ENCODE measurements at regions of chr12 and their contacts with region 1.

Region 1: DNA sequence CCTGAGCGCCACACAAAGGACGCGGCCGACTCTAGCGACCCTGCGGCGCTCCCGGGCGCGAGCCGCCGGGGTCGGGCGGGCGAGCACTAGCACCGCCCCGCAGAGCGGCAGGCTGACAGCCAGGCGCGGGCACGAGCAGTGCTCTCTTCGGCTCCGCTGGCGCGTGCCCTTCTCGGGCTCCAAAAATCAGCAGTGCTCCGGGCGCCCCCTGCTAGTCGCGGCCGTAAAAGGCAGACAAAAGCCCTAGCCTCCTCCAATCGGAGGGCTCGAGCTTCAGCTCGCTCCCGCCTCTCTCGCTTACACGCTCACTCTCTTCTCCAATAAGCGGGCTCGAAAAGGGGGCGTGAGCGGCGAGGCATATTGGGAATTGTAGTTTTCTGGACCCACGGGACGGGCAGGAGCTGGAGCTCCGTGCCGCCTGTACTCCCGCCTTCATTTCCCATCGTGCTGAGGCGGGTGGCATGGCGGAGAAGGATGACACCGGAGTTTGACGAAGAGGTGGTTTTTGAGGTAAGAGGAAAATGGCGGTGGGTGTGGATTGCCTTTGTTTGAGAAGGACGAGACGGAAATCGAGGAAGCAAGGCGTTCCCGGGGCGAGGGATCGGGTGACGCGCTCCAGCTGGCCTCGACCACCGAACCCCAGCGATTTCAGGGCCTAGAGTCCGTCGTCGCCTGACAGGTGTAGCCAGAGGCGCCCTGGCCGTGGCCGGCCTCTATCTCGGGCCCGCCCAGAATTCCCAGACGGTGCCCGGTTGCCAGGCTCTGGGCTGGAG is at the starts of genes FGD6 and VEZT:
- DNase-seq: peak; percentile 99
- H3K4me3 Mint-ChIP-seq: peak within 1 kb of the TSS; percentile 93
- H3K27ac Mint-ChIP-seq: peak within 1 kb of the TSS; percentile 97
- H3K4me1 Mint-ChIP-seq: peaks cover 32% of the 10 kb centered on the region
- H3K27me3 Mint-ChIP-seq: peaks cover 11% of the 10 kb centered on the region
- total RNA-seq, gene FGD6: 0.56 to 0.69 TPM
- total RNA-seq, gene VEZT: 33.3 to 41.7 TPM

Region 2: GRCh38 chr12:95182868-95183415 is 34.6 kb before region 1 on chr12:
- CTCF ChIA-PET with region 1: no interaction called
- POLR2A ChIA-PET with region 1: no interaction called
- DNase-seq: no peak
- H3K4me3 Mint-ChIP-seq: no peak overlapping the region
- H3K27ac Mint-ChIP-seq: no peak overlapping the region
- H3K4me1 Mint-ChIP-seq: no peaks in the 10 kb centered on the region
- H3K27me3 Mint-ChIP-seq: no peaks in the 10 kb centered on the region

Region 3: GRCh38 chr12:95204141-95204866 is 13.3 kb before region 1 on chr12:
- CTCF ChIA-PET with region 1: interaction called, 11 read pairs
- POLR2A ChIA-PET with region 1: no interaction called
- DNase-seq: no peak
- H3K4me3 Mint-ChIP-seq: no peak overlapping the region
- H3K27ac Mint-ChIP-seq: no peak overlapping the region
- H3K4me1 Mint-ChIP-seq: peaks cover 8% of the 10 kb centered on the region
- H3K27me3 Mint-ChIP-seq: no peaks in the 10 kb centered on the region

Measured in activated CD4-positive, alpha-beta T cell treated with anti-CD3 and anti-CD28 coated beads, Interleukin-2, amount 10 ng/mL, durations not matched to agents 7 days and 5 days (primary cell).